A549 (cell line): ENCODE measurements at regions of chr17 and their contacts with region 1.

Region 1: DNA sequence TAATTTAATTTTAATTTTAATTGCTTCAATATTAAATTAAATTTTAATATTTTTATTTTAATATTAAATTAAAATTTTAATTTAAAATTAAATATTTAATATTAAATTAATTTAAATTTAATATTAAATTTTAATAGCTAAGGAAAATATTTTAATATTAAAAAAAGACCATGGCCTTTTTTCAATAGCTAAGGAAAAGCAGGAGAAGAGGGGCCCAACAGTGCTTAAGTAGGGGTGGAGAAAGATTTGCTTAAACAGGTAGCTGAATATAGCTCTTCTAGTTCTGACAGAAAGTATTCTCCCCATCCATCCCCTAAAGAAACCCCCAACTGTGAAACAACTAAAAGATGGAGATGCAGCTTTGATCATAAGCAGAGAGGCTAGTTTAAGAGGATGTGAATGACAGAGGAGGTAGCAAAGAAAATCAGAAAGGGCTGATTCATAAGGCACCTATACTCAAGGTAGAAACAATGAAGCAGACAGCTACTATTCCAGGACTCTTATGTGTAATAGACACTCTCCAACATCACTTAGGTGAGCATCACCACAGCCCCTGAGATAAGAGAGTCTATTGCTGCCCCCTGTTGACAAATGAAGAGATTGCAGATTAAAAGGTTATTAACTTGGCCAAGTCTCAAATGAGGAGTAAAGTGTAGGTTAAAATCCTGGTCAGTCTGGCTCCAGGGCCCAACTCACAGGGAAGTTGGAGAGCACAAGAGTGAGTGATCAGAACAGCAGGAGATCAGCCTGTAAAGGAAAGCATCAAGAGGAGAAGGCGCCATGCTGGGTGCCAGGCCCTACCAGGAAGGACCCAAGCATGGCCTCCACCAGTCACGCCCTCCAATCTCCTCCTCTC is 7.8 kb upstream of the RNASEK start:
- DNase-seq: peak; percentile 84 to 85
- ATAC-seq: peak; percentile 91
- H3K4me3 ChIP-seq: no peak overlapping the region
- H3K27ac ChIP-seq: no peak overlapping the region
- H3K4me1 ChIP-seq: no peaks in the 10 kb centered on the region
- CTCF ChIP-seq: peak; percentile 96
- EP300 ChIP-seq: no peak
- POLR2A ChIP-seq: no peak
- RAD21 ChIP-seq: peak; percentile 96 to 97

Region 2: DNA sequence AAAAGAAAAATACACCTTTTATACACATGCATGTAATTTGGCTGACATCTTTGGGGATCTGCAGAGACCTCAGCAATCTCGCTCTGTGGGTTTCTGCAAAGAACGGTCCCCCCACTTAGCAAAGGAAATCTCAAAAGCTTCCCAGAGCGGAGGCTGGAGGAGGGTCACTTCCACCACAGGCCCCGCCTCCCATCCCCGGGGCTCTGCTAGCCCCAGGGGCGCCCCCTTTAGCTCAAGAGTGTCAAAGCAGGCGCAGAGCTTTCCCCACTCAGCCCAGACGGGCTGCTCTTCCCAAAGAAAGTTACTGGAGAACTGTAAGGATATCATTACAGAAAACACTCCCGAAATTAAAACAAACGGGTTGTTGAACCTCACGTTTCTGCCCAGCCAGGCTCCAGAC is 302.9 kb before region 1 on chr17:
- CTCF ChIA-PET with region 1: interaction called, 17 read pairs
- POLR2A ChIA-PET with region 1: no interaction called
- DNase-seq: peak; percentile 50 to 72
- ATAC-seq: peak; percentile 73 to 94; a peak in 5 of 6 replicates
- H3K4me3 ChIP-seq: no peak overlapping the region
- H3K27ac ChIP-seq: no peak overlapping the region
- H3K4me1 ChIP-seq: no peaks in the 10 kb centered on the region
- CTCF ChIP-seq: peak; percentile 32; the same call in 2 of the 3 replicates
- EP300 ChIP-seq: no peak
- POLR2A ChIP-seq: no peak
- RAD21 ChIP-seq: peak in 1 of 2 experiments; percentile 22; a peak in 1 of 5 replicates

Region 3: DNA sequence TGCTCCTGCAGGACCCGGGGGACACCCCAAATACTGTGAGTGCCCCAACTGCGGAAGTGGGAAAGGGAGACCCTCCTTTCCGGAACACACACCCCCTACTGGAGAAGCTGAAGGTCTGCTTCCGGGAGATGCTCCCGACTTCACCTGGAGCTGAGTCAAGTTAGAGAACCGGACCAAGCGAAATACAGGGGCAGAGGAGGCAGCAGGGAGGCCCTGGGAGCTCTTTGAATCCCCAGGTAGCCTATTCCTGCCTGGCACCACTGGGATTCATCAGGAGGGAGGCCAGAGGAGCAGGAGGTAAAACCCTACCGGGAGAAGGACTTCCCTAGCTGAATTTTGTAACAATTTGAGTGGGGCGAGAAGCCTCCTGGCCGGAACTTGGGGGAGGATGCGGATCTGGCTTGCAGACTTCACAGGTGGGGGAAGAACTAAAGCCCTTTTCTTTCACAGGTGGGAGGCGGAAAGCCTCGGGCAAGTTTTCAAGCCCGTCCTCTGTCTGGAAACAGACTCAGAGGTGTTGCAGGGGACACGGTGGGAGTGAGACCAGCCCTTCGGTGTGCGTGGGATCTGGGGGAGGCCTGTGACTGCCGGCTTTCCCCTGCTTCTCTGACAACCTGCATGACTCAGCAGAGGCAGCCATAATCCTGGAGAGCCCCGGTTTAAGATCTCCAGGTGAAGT is 150.7 kb before region 1 on chr17:
- CTCF ChIA-PET with region 1: interaction called, 37 read pairs
- POLR2A ChIA-PET with region 1: no interaction called
- DNase-seq: peak; percentile 46 to 73
- ATAC-seq: peak; percentile 92 to 93; a peak in 5 of 6 replicates
- H3K4me3 ChIP-seq: peak overlapping the region; percentile 46
- H3K27ac ChIP-seq: peak overlapping the region; percentile 83 to 88
- H3K4me1 ChIP-seq: no peaks in the 10 kb centered on the region; the same call in 1 of the 3 replicates
- CTCF ChIP-seq: peak; percentile 40; the same call in 2 of the 3 replicates
- EP300 ChIP-seq: no peak
- POLR2A ChIP-seq: no peak; the same call in 1 of the 2 replicates
- RAD21 ChIP-seq: 0 out of 5 replicates have a peak, but pooled peaks of 1 of the 2 experiments have one; percentile 4

Region 4: DNA sequence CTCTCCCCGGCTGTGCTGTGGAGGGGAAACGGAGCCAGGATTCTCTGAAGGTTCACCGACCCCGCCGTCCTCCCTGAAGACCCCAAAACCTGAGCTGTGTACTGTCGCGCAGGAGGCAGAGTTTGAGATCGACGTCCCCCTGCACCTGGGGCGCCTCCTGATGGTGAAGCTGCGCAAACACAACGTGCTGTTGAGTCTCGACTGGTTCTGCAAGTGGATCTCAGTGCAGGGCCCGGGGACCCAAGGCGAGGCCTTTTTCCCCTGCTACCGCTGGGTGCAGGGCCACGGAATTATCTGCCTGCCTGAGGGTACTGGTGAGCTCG is 110.5 kb before region 1 on chr17:
- CTCF ChIA-PET with region 1: interaction called, 13 read pairs
- POLR2A ChIA-PET with region 1: no interaction called
- DNase-seq: no peak
- ATAC-seq: no peak
- H3K4me3 ChIP-seq: no peak overlapping the region
- H3K27ac ChIP-seq: no peak overlapping the region
- H3K4me1 ChIP-seq: no peaks in the 10 kb centered on the region
- CTCF ChIP-seq: no peak
- EP300 ChIP-seq: no peak
- POLR2A ChIP-seq: no peak
- RAD21 ChIP-seq: peak in 1 of 2 experiments; percentile 34; a peak in 2 of 5 replicates

Region 5: GRCh38 chr17:6927290-6928126 is 77.1 kb before region 1 on chr17:
- CTCF ChIA-PET with region 1: interaction called, 23 read pairs
- POLR2A ChIA-PET with region 1: no interaction called
- DNase-seq: no peak
- ATAC-seq: no peak
- H3K4me3 ChIP-seq: no peak overlapping the region
- H3K27ac ChIP-seq: no peak overlapping the region
- H3K4me1 ChIP-seq: peaks cover 7% of the 10 kb centered on the region; the same call in 2 of the 3 replicates
- CTCF ChIP-seq: no peak
- EP300 ChIP-seq: no peak
- POLR2A ChIP-seq: no peak
- RAD21 ChIP-seq: no peak

Region 6: GRCh38 chr17:7021993-7022778 is 17.6 kb after region 1 on chr17:
- CTCF ChIA-PET with region 1: interaction called, 71 read pairs
- POLR2A ChIA-PET with region 1: no interaction called
- DNase-seq: peak; percentile 78 to 95
- ATAC-seq: peak; percentile 60 to 83
- H3K4me3 ChIP-seq: no peak overlapping the region
- H3K27ac ChIP-seq: peak overlapping the region; percentile 42 to 71; a peak in 5 of 6 replicates
- H3K4me1 ChIP-seq: peaks cover 24% of the 10 kb centered on the region
- CTCF ChIP-seq: peak; percentile 91
- EP300 ChIP-seq: no peak
- POLR2A ChIP-seq: no peak
- RAD21 ChIP-seq: peak; percentile 82 to 88